T-cell (primary cell): ENCODE measurements at regions of chr18 and their contacts with region 1.

Region 1: DNA sequence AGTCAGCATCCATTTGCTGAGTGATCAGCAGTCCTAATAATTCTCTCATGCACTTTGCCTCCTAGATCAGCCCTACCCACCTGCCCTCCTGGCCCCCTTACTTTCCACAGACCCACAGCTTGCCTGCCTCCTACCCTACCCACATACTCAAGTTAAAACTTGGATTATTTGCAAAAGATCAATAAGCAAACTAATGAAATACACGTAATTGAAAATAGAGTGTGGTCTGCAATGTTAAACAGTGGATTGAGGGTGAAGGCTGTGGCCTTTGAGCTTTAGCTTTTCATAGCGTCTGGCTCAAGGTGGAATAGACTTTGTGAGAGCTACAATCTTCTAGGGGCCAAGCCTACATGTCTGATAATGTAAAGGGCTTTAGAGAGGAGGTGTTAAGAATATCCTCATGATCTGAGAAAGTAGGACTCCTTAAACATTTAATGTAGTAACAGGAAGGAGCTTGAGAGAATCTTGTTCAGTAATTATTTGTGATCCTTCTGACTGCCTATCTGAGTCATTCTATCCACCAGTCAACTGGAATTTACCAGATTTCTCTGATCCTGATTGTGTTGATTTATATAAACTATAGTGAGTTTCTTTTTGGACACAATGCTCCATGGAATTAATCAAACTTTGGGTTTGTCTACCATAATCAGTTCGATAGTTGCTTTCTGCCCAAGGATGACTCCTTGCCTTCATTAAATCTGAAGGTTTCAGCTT is 310.0 kb downstream of the HRH4 start:
- DNase-seq: no peak
- ATAC-seq: no peak
- H3K4me3 ChIP-seq: no peak overlapping the region
- H3K4me3 Mint-ChIP-seq: no peak overlapping the region
- H3K27ac ChIP-seq: no peak overlapping the region
- H3K27ac Mint-ChIP-seq: no peak overlapping the region
- H3K4me1 ChIP-seq: no peaks in the 10 kb centered on the region
- H3K4me1 Mint-ChIP-seq: no peaks in the 10 kb centered on the region
- H3K27me3 ChIP-seq: no peaks in the 10 kb centered on the region
- H3K27me3 Mint-ChIP-seq: peaks cover 0 to 17% of the 10 kb centered on the region in 2 donors

Region 2: DNA sequence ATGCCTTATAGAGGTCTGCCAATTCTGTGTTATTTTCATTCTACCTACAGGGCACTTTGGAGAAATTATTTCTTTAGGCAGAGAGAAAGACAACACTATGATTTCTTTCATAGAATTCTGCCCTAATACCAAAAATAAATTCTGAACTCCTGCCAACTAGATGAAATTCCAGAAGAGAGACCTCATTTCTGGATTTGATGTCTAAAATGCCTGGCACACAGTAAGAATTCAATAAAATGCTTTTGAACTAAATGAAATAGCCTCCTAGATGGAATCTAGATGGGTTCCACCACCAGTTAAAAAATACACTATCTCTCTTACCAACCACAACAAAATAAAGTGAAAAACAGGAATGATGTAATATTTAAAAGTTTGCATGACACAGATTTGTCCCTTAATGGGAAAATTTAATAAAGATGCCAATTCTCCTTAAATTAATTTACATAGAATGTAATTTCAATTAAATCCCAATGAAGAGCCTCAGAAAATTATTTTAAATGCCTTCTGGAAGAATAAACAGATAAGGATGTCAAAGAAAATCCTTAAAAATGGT is 447.8 kb before region 1 on chr18:
- CTCF ChIA-PET with region 1: no interaction called
- POLR2A ChIA-PET with region 1: no interaction called
- DNase-seq: no peak
- ATAC-seq: no peak
- H3K4me3 ChIP-seq: no peak overlapping the region
- H3K4me3 Mint-ChIP-seq: no peak overlapping the region
- H3K27ac ChIP-seq: no peak overlapping the region
- H3K27ac Mint-ChIP-seq: no peak overlapping the region
- H3K4me1 ChIP-seq: no peaks in the 10 kb centered on the region
- H3K4me1 Mint-ChIP-seq: no peaks in the 10 kb centered on the region
- H3K27me3 ChIP-seq: no peaks in the 10 kb centered on the region
- H3K27me3 Mint-ChIP-seq: no peaks in the 10 kb centered on the region

Region 3: DNA sequence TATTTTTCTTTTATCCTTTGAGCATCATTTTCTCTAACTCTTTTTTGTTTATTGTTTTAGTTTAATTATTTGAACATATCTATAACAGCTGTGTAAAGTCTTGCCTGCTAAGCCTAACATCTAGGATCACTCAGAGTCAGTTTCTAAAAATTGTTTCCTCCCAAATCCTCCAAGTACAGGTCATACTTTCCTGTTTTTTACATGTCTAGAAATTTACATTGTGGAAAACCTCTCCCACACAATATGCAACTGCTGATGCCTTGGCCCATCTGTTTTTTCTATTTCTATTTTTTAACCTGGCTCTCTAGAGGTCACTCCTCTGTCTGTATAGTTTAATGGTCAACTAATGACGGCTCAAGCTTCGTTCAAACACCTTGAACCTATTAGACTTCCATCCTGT is 49.1 kb before region 1 on chr18:
- CTCF ChIA-PET with region 1: no interaction called
- POLR2A ChIA-PET with region 1: no interaction called
- DNase-seq: no peak
- ATAC-seq: no peak
- H3K4me3 ChIP-seq: no peak overlapping the region
- H3K4me3 Mint-ChIP-seq: no peak overlapping the region
- H3K27ac ChIP-seq: no peak overlapping the region
- H3K27ac Mint-ChIP-seq: no peak overlapping the region
- H3K4me1 ChIP-seq: no peaks in the 10 kb centered on the region
- H3K4me1 Mint-ChIP-seq: no peaks in the 10 kb centered on the region
- H3K27me3 ChIP-seq: peaks cover 0 to 3% of the 10 kb centered on the region in 2 experiments
- H3K27me3 Mint-ChIP-seq: peaks cover 18 to 22% of the 10 kb centered on the region in 2 donors

Region 4: DNA sequence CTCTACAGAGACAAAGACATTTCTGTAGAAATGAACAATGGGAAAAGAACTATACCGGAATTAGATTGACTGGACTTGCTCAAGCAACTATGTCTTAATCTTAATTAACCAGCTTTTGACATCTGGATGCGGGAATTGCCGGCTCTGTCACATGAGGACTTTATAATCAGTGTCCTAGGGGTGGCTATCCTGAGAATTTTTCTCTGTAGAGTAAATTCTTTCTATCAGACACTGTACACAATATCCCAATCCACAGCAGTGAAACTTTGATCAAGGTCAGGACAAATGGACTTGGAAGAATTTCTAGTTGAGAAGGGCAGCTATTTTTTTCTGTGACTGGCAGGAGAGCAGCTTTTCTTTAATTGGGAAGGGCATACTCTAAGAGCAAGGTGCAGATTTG is 12.1 kb after region 1 on chr18:
- CTCF ChIA-PET with region 1: no interaction called
- POLR2A ChIA-PET with region 1: interaction called in 1 of 2 experiments, 10 read pairs
- DNase-seq: no peak
- ATAC-seq: no peak
- H3K4me3 ChIP-seq: no peak overlapping the region
- H3K4me3 Mint-ChIP-seq: no peak overlapping the region
- H3K27ac ChIP-seq: no peak overlapping the region
- H3K27ac Mint-ChIP-seq: no peak overlapping the region
- H3K4me1 ChIP-seq: no peaks in the 10 kb centered on the region
- H3K4me1 Mint-ChIP-seq: no peaks in the 10 kb centered on the region
- H3K27me3 ChIP-seq: peaks cover 0 to 3% of the 10 kb centered on the region in 2 experiments
- H3K27me3 Mint-ChIP-seq: no peaks in the 10 kb centered on the region

Region 5: DNA sequence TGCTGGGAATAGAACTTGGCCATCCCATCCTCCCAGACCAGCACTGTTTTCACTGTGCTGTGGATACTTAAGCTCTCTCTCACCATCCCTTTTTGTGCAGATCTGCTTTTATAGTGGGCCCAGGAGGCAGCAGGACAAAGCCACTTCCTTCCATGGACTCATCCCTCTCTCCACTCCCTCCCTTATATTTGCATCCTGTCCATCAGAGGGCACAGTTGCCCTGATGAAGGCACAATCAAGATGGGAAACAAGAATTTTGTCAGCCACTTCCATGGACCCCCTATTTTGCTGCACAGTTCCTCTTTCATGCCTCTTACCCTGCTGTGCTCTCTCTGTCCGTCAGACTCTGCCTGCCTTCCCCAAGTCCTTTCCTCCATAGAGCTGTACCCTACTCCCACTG is 28.7 kb after region 1 on chr18:
- CTCF ChIA-PET with region 1: no interaction called
- POLR2A ChIA-PET with region 1: no interaction called
- DNase-seq: no peak
- ATAC-seq: no peak
- H3K4me3 ChIP-seq: no peak overlapping the region
- H3K4me3 Mint-ChIP-seq: no peak overlapping the region
- H3K27ac ChIP-seq: no peak overlapping the region
- H3K27ac Mint-ChIP-seq: no peak overlapping the region
- H3K4me1 ChIP-seq: no peaks in the 10 kb centered on the region
- H3K4me1 Mint-ChIP-seq: no peaks in the 10 kb centered on the region
- H3K27me3 ChIP-seq: no peaks in the 10 kb centered on the region
- H3K27me3 Mint-ChIP-seq: peaks cover 0 to 16% of the 10 kb centered on the region in 2 donors